CD14-positive monocyte (primary cell): ENCODE measurements at regions of chr2 and their contacts with region 1.

Region 1: GRCh38 chr2:25301453-25302352 is 40.0 kb downstream of the DNMT3A start:
- DNase-seq: peak; percentile 83 to 90 (median 84)
- H3K4me3 ChIP-seq: peak overlapping the region in 1 of 3 experiments; percentile 58
- H3K4me3 Mint-ChIP-seq: peak overlapping the region; percentile 66 to 80
- H3K27ac ChIP-seq: peak overlapping the region; percentile 3 to 68
- H3K27ac Mint-ChIP-seq: peak overlapping the region; percentile 58 to 90 (median 81)
- H3K4me1 ChIP-seq: peaks cover 51 to 60% of the 10 kb centered on the region in 2 donors
- H3K4me1 Mint-ChIP-seq: peaks cover 58% of the 10 kb centered on the region
- H3K27me3 ChIP-seq: no peaks in the 10 kb centered on the region
- H3K27me3 Mint-ChIP-seq: peaks cover 1 to 10% (median 9%) of the 10 kb centered on the region in 3 donors
- CTCF ChIP-seq: no peak

Region 2: DNA sequence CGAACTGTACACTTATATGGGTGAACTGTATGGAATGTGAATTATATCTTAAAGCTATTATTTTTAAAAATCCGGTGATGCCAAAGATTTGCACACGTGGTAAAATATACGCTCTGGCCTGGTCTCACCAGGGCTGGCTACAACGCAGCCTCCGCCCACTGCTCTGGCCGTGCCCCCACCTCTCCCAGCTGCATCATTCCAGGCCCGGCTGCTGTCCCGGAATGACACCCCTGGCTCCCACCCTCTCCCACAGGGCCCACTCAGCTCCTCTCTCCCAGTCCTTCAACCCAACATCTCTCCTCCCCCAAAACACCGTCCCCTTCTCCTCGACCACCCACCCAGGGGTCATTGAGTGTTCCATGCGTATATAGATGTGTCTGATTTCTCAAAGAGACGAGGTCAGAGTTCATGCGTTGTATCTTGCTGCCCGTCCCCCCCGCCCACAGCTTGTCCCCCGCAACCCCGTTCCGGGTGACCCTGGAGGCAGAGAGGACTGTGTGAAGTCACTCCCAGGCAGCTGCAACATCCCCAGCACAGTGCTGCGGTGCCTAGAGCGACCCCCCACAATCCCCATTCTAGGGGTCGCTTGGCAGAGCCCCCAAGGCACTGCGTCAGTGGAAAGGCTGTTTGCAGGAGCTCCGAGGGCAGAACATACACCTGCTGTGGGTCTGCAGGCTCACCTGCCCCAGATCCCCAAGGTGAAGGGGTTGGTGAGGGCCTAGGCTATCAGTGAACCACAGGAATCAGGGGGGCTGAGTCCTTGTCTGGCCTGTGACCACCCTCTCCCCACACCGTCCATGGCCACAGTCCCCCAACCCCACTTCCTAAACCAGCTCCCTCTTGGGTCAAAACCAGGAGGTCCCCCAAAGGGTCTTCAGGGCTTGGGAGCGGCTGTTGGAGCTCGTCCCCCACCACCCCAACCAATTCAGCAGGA is 26.7 kb after region 1 on chr2:
- intact Hi-C with region 1: no loop called
- DNase-seq: no peak
- H3K4me3 ChIP-seq: no peak overlapping the region
- H3K4me3 Mint-ChIP-seq: no peak overlapping the region
- H3K27ac ChIP-seq: no peak overlapping the region
- H3K27ac Mint-ChIP-seq: no peak overlapping the region
- H3K4me1 ChIP-seq: no peaks in the 10 kb centered on the region
- H3K4me1 Mint-ChIP-seq: peaks cover 8% of the 10 kb centered on the region
- H3K27me3 ChIP-seq: no peaks in the 10 kb centered on the region
- H3K27me3 Mint-ChIP-seq: peaks cover 1 to 5% (median 4%) of the 10 kb centered on the region in 3 donors
- CTCF ChIP-seq: no peak

Region 3: GRCh38 chr2:25342372-25343186 is 40.9 kb after region 1 on chr2:
- intact Hi-C with region 1: loop called in 1 of 2 experiments (anchors 5 kb)
- DNase-seq: peak; percentile 70 to 73 (median 72)
- H3K4me3 ChIP-seq: peak overlapping the region; percentile 18 to 78 (median 52)
- H3K4me3 Mint-ChIP-seq: peak overlapping the region; percentile 76 to 80
- H3K27ac ChIP-seq: no peak overlapping the region
- H3K27ac Mint-ChIP-seq: peak overlapping the region in 1 of 7 donors; percentile 37
- H3K4me1 ChIP-seq: peaks cover 7 to 27% of the 10 kb centered on the region in 2 donors
- H3K4me1 Mint-ChIP-seq: peaks cover 24% of the 10 kb centered on the region
- H3K27me3 ChIP-seq: peaks cover 0 to 7% of the 10 kb centered on the region in 2 donors
- H3K27me3 Mint-ChIP-seq: peaks cover 9 to 22% (median 14%) of the 10 kb centered on the region in 3 donors
- CTCF ChIP-seq: peak; percentile 99

Region 4: GRCh38 chr2:25362049-25362433 is 60.3 kb after region 1 on chr2:
- intact Hi-C with region 1: no loop called
- DNase-seq: peak; percentile 88 to 93 (median 93)
- H3K4me3 ChIP-seq: peak overlapping the region; percentile 42 to 85 (median 57)
- H3K4me3 Mint-ChIP-seq: peak overlapping the region; percentile 80 to 99
- H3K27ac ChIP-seq: peak overlapping the region; percentile 63 to 79
- H3K27ac Mint-ChIP-seq: peak overlapping the region; percentile 87 to 97 (median 91)
- H3K4me1 ChIP-seq: peaks cover 12 to 19% of the 10 kb centered on the region in 2 donors
- H3K4me1 Mint-ChIP-seq: peaks cover 12% of the 10 kb centered on the region
- H3K27me3 ChIP-seq: no peaks in the 10 kb centered on the region
- H3K27me3 Mint-ChIP-seq: peaks cover 4 to 5% (median 4%) of the 10 kb centered on the region in 3 donors
- CTCF ChIP-seq: peak; percentile 95